Natural killer cell (primary cell): ENCODE measurements at regions of chr15 and their contacts with region 1.

Region 1: DNA sequence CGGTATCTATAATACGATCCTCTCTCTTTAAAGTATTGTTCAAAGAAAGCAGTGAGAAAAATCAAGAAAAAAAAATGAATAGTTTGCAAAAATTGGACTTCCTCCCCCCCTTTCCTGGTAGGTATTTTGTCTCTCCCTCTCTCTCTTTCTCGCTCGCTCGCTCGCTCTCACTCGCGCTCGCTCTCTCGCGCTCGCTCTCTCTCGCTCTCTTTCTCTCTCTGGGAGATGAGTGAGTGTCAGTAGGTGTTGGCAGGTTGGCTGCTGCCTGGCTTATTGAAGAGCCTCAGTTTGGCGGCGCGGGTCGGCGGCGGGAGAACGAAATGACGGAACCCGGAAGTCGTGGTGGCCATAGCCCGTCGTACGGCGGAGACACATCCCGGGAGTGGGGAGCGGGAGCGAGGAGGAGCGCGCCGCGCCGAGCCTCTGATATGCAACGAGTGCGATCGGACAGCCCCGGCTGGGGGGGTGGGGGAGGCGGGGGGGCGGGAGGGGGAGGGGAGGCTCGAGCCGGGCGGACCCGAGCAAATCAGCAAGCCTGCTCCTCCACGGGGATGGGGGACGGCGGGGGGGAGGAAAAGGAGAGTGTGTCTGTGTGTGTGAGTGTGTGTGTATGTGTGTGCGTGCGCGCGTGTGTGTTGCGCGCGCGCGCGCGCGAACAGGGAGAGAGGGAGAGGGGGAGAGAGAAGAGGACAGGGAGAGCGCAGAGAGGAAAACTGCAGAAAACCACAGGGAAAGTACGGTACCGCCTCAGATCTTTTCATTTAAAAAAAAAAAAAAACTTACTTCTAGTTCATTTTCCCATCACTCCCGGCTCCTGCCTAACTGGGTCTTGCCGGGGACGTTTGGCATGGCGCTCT is at the start of gene MEIS2:
- DNase-seq: peak; percentile 28 to 46
- ATAC-seq: peak; percentile 14 to 42 (median 38)
- H3K4me3 ChIP-seq: peak within 1 kb of the TSS; percentile 42
- H3K4me3 Mint-ChIP-seq: peak within 1 kb of the TSS; percentile 92
- H3K27ac ChIP-seq: no peak within 1 kb of the TSS
- H3K27ac Mint-ChIP-seq: peak within 1 kb of the TSS; percentile 72 to 83
- H3K4me1 ChIP-seq: peaks cover 45% of the 10 kb centered on the region
- H3K4me1 Mint-ChIP-seq: peaks cover 44 to 61% of the 10 kb centered on the region in 2 donors
- H3K27me3 ChIP-seq: peaks cover 60% of the 10 kb centered on the region
- H3K27me3 Mint-ChIP-seq: peaks cover 56 to 65% of the 10 kb centered on the region in 2 donors
- CTCF ChIP-seq: no peak
- total RNA-seq, gene MEIS2: 0.35 TPM in 1 of 3 donors, not detected in the others

Region 2: GRCh38 chr15:36883713-36884517 is 216.4 kb before region 1 on chr15:
- intact Hi-C with region 1: loop called (anchors 10 kb)
- DNase-seq: peak in 1 of 2 donors; percentile 59
- ATAC-seq: peak in 1 of 3 donors; percentile 49
- H3K4me3 ChIP-seq: no peak overlapping the region
- H3K4me3 Mint-ChIP-seq: no peak overlapping the region
- H3K27ac ChIP-seq: no peak overlapping the region
- H3K27ac Mint-ChIP-seq: no peak overlapping the region
- H3K4me1 ChIP-seq: peaks cover 4% of the 10 kb centered on the region
- H3K4me1 Mint-ChIP-seq: peaks cover 0 to 7% of the 10 kb centered on the region in 2 donors
- H3K27me3 ChIP-seq: peaks cover 86% of the 10 kb centered on the region
- H3K27me3 Mint-ChIP-seq: peaks cover 86 to 90% of the 10 kb centered on the region in 2 donors
- CTCF ChIP-seq: no peak